Activated naive CD4-positive, alpha-beta T cell treated with anti-CD3 and anti-CD28 coated beads for 36 hours (primary cell): ENCODE measurements at regions of chr1 and their contacts with region 1.

Region 1: DNA sequence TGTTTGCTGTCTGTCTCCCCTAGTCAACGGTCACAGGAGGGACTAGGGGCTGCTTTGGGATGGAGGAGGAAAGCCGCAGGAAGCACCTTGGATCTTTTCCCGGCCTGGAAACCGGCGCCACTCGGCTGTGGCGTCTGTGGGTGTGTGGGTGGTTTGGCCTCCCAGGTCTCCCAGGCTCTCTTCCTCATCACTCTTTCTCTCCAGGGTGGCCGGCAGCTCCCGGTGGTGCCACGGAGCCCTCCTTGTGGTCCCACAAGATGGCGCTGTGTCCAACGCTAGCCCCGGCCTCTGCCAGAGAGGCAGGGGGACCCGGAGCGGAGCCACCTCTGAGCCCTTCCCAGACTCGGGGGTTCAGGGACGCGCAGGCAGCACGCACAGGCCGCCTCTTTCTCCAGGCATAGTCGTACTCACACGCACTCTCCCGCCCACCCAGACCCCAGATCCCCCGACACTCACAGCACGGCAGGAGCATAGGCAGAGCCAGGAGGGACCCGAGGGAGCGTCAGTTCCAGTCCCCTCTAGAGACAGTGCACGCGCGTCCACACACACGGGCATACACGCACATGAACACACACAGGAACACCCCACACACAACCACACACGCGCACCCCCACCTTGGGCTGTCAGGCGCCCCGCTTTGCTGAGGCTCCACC is 31.2 kb downstream of the CDCP2 start:
- DNase-seq: peak; percentile 81
- H3K4me3 Mint-ChIP-seq: peak overlapping the region; percentile 5
- H3K27ac Mint-ChIP-seq: no peak overlapping the region
- H3K4me1 Mint-ChIP-seq: peaks cover 8% of the 10 kb centered on the region
- H3K27me3 Mint-ChIP-seq: no peaks in the 10 kb centered on the region

Region 2: DNA sequence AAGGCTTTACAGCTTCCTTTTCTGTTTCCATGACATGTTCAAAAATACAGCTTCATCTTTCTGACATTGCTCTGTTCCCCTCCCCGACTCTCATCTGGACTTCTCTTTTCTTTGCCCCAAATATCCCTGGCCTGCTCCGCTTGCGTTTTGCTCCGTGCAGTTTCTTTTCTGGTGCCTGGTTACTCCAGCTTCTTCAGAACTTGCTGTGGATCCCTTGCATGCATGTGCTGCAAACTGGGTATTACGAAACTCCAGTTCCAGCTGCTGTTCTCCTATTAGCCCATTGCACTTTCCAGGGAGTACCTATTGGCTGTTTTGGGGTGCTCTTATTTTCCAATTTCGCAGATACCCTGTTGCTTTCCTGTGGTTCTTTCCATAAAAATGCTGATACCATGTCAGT is 273.6 kb before region 1 on chr1:
- CTCF ChIA-PET with region 1: no interaction called
- intact Hi-C with region 1: no loop called
- DNase-seq: no peak
- H3K4me3 Mint-ChIP-seq: no peak overlapping the region
- H3K27ac Mint-ChIP-seq: no peak overlapping the region
- H3K4me1 Mint-ChIP-seq: no peaks in the 10 kb centered on the region
- H3K27me3 Mint-ChIP-seq: no peaks in the 10 kb centered on the region

Region 3: DNA sequence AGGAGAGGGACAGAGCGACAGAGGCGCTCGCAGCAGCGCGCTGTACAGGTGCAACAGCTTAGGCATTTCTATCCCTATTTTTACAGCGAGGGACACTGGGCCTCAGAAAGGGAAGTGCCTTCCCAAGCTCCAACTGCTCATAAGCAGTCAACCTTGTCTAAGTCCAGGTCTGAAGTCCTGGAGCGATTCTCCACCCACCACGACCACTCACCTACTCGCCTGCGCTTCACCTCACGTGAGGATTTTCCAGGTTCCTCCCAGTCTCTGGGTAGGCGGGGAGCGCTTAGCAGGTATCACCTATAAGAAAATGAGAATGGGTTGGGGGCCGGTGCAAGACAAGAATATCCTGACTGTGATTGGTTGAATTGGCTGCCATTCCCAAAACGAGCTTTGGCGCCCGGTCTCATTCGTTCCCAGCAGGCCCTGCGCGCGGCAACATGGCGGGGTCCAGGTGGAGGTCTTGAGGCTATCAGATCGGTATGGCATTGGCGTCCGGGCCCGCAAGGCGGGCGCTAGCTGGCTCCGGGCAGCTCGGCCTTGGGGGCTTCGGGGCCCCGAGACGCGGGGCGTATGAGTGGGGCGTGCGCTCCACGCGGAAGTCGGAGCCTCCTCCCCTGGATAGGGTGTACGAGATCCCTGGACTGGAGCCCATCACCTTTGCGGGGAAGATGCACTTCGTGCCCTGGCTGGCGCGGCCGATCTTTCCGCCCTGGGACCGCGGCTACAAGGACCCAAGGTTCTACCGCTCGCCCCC is 78.3 kb after region 1 on chr1 and contains the starts of genes CYB5RL and MRPL37:
- CTCF ChIA-PET with region 1: no interaction called
- intact Hi-C with region 1: loop called (anchors 2 kb)
- DNase-seq: peak; percentile 96
- H3K4me3 Mint-ChIP-seq: peak within 1 kb of the TSS; percentile 92
- H3K27ac Mint-ChIP-seq: peak within 1 kb of the TSS; percentile 59
- H3K4me1 Mint-ChIP-seq: peaks cover 32% of the 10 kb centered on the region
- H3K27me3 Mint-ChIP-seq: no peaks in the 10 kb centered on the region
- total RNA-seq, gene CYB5RL: 12.7 to 13.6 TPM
- total RNA-seq, gene MRPL37: 203 to 211 TPM